ENCODE measurements at regions of chr19 and their contacts with region 1.

Region 1: DNA sequence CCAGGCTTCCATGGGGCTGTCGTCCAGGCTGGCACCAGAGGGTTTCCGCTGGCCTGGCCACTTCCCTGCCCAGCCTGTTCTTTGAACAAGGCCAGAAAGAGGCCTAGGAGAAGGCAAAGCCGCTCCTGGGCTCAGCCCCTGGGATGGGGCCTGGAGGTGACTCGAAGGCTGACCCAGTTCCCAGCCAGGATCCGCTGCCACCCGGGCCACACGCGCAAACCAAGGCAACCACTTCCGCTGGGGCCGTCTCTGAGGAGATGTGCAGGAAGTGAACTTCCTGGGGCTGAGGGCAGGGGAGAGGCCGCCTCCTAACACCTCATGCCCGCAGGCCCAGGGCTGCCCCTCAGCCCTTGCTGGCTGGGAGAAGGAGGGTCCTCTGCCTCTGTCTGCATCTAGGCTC is 15.2 kb downstream of the PLEKHF1 start:
- DNase-seq: peak in 1 of 2 donors; percentile 77
- H3K4me3 ChIP-seq: no peak overlapping the region
- H3K27ac ChIP-seq: peak overlapping the region; percentile 65 to 84
- H3K4me1 ChIP-seq: peaks cover 18 to 58% of the 10 kb centered on the region in 2 donors
- H3K27me3 ChIP-seq: no peaks in the 10 kb centered on the region
- CTCF ChIP-seq: no peak

Region 2: GRCh38 chr19:29596885-29597525 is 83.4 kb before region 1 on chr19:
- intact Hi-C with region 1: no loop called
- DNase-seq: peak in 1 of 2 donors; percentile 42
- H3K4me3 ChIP-seq: no peak overlapping the region
- H3K27ac ChIP-seq: no peak overlapping the region
- H3K4me1 ChIP-seq: no peaks in the 10 kb centered on the region
- H3K27me3 ChIP-seq: no peaks in the 10 kb centered on the region
- CTCF ChIP-seq: no peak

Region 3: GRCh38 chr19:29665215-29665825 is 15.1 kb before region 1 on chr19 and contains the start of gene PLEKHF1:
- intact Hi-C with region 1: loop called (anchors 2 kb)
- DNase-seq: peak; percentile 72 to 95
- H3K4me3 ChIP-seq: peak within 1 kb of the TSS; percentile 75 to 93
- H3K27ac ChIP-seq: peak within 1 kb of the TSS; percentile 99
- H3K4me1 ChIP-seq: peaks cover 39 to 64% of the 10 kb centered on the region in 2 donors
- H3K27me3 ChIP-seq: no peaks in the 10 kb centered on the region
- CTCF ChIP-seq: no peak
- total RNA-seq, gene PLEKHF1: 68.3 TPM

Region 4: DNA sequence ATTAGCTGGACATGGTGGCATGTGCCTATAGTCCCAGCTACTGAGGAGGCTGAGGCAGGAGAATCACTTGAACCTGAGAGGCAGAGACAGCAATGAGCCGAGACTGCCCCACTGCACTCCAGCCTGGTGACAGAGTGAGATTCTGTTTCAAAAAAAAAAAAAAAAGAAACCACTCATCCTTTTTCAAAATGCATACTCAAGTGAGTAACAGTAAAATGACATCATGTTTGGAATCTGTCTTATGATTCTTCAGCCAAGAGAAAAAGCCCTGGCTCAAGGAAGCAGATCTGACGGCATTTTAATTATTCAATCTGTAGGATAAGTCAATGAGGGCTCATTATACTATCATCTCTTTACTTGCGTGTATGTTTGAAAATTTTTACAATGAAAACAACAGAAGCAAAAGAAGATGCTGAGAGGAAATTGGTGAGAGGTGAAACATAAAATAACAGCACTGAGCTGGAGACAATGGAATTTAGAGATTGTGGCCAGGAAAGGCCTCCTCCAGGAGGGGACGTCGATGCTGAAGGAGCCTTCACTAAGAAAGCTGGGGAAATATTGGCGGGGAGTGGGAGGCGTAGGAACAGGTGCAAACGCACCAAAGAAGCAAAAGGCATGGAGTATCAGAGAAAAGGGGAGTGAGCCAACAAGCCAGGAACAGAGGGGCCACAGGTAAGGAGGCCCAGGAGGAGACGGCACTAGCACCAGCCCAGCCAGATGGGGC is 118.5 kb after region 1 on chr19:
- intact Hi-C with region 1: no loop called
- DNase-seq: no peak
- H3K4me3 ChIP-seq: no peak overlapping the region
- H3K27ac ChIP-seq: no peak overlapping the region
- H3K4me1 ChIP-seq: no peaks in the 10 kb centered on the region
- H3K27me3 ChIP-seq: no peaks in the 10 kb centered on the region
- CTCF ChIP-seq: no peak